PC-3 (cell line): ENCODE measurements at regions of chr1 and their contacts with region 1.

Region 1: DNA sequence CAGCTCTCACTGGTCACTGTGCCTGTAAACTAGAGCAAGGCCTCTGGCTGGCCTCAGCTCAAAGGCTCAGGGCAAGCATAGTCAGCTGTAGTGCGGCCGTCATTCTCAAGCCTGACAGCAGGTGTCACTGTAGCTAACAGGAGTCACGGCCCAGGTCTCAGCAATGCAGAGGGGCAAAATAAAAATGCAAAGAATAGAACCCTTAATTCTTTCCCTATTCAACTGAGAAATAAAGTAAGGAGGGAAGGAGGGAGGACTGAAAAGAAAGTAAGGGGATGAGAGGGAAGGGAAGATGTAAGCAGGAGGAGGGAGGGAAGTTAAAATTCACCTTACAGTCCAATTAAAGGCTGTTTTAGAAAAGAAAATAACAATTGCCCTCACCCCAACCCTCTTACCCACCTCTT is 106.1 kb downstream of the KIAA0319L start:
- DNase-seq: peak; percentile 83
- ATAC-seq: peak; percentile 79
- H3K4me3 ChIP-seq: no peak overlapping the region
- H3K27ac ChIP-seq: no peak overlapping the region
- H3K4me1 ChIP-seq: peaks cover 36% of the 10 kb centered on the region
- H3K27me3 ChIP-seq: no peaks in the 10 kb centered on the region
- CTCF ChIP-seq: peak; percentile 92

Region 2: DNA sequence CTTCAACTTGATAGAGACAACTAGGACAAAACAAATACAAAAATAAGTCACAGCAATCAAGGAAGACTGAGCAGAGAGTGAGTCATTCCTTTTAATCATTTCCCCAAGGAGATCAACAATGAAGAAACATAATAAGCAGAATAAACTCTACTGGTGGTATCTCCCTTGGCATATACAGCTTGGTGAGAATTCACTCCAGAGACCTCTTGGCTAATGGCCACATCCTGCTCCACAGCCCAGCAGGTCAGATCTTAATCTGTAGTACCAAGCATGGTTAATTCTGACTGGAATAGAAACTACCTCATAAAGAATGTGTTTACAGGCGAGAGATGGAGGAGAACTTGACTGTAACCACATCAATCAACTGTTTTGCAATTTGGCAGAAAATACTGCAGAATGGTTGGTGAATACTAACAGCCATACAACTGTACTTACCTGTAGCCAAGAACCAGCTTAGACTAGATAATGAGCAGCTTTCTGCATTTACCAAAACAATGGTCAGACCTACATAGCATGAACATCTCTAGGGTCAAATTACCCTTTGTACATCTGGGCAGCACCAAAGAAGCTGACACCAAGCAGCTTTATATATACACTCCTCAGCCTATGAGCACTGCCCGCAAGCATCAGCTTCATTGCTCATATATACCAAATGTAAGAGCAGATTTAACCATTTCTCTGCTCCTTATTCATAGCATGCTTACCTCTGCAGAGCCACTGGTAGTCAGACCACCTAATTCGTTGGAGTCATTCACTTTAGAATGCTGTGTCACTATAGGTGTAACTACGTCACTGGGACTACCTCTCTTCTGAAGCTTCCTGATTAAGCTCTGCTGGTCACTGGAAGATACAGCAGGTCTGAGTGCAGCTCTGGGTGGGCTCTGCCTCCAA is 55.0 kb after region 1 on chr1:
- CTCF ChIA-PET with region 1: interaction called, 3 read pairs
- POLR2A ChIA-PET with region 1: no interaction called
- intact Hi-C with region 1: loop called (anchors 5 kb)
- DNase-seq: peak; percentile 96
- ATAC-seq: peak; percentile 89
- H3K4me3 ChIP-seq: no peak overlapping the region
- H3K27ac ChIP-seq: peak overlapping the region; percentile 90
- H3K4me1 ChIP-seq: peaks cover 32% of the 10 kb centered on the region
- H3K27me3 ChIP-seq: no peaks in the 10 kb centered on the region
- CTCF ChIP-seq: no peak

Region 3: GRCh38 chr1:35544978-35545377 is 93.9 kb after region 1 on chr1:
- CTCF ChIA-PET with region 1: no interaction called
- POLR2A ChIA-PET with region 1: no interaction called
- intact Hi-C with region 1: loop called (anchors 1 kb)
- DNase-seq: peak; percentile 37
- ATAC-seq: no peak
- H3K4me3 ChIP-seq: no peak overlapping the region
- H3K27ac ChIP-seq: no peak overlapping the region
- H3K4me1 ChIP-seq: peaks cover 17% of the 10 kb centered on the region
- H3K27me3 ChIP-seq: no peaks in the 10 kb centered on the region
- CTCF ChIP-seq: peak; percentile 49

Region 4: DNA sequence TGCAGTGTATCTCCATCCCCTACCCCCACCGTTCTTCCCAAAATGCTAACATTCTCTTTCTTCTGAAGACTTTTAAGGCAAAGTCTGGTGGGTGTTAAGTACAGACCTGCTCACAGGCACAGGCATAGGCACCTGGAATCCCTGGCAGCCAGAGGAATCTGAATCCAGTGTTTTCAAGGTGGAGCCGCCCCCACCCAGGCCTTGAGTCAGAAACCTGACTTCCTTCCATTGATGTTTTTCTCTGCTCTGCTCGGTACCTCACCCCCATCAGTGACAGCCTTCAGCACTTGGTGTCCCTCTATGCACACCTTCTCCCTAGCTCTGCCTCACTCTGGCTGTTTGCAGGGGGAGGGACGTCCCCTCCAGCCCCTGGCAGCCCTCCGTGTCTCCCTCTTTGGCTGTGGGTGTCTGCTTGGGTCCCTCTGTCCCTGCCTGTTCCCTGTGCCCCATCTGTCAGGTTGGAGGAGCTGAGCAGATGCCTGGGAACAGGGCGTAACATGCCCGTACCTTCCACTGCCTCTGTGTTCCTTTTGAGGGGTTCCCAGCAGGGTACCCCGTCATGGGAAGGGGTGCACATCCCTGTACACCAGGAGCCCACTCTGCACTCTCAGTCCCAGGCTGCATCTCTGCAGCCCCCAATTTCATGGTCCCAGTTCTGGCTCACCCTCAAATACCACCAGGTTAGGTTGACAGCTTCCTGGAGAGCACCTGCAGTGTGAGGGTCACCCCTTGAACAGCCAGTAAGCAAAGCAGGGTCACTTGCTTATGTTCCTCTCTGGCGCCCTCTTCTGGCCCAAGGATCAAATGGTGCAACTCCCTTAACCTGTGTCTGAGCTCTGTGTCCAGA is 113.1 kb after region 1 on chr1:
- CTCF ChIA-PET with region 1: interaction called, 16 read pairs
- POLR2A ChIA-PET with region 1: interaction called, 6 read pairs
- intact Hi-C with region 1: loop called (anchors 1 kb)
- DNase-seq: peak; percentile 81
- ATAC-seq: peak; percentile 62
- H3K4me3 ChIP-seq: no peak overlapping the region
- H3K27ac ChIP-seq: no peak overlapping the region
- H3K4me1 ChIP-seq: peaks cover 7% of the 10 kb centered on the region
- H3K27me3 ChIP-seq: no peaks in the 10 kb centered on the region
- CTCF ChIP-seq: peak; percentile 83

Region 5: GRCh38 chr1:35726450-35727433 is 275.6 kb after region 1 on chr1:
- CTCF ChIA-PET with region 1: interaction called, 4 read pairs
- POLR2A ChIA-PET with region 1: no interaction called
- intact Hi-C with region 1: loop called (anchors 2 kb)
- DNase-seq: peak; percentile 61
- ATAC-seq: peak; percentile 97
- H3K4me3 ChIP-seq: no peak overlapping the region
- H3K27ac ChIP-seq: no peak overlapping the region
- H3K4me1 ChIP-seq: no peaks in the 10 kb centered on the region
- H3K27me3 ChIP-seq: no peaks in the 10 kb centered on the region
- CTCF ChIP-seq: peak; percentile 90